ENCODE measurements at regions of chr4 and their contacts with region 1.

Region 1: DNA sequence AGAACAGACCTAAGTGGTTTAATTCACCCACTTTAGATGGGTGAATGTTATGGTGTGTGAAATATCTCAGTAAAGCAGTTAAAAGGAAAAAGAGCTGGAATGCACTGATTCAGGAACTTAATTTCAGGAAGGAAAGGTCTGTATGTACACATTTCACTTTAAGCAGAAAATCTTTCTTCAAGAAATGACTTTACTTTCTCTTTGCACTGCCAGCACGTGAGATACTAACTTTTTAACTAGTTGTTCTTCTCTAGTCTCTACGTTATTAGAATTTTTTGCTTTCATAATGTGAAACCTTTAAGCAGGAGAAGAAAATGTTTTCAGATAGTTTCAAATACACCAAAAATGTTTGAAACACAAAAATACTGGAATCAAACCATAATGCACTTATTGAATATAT is 18.8 kb downstream of the C4orf46 start:
- DNase-seq: no peak
- ATAC-seq: no peak
- H3K4me3 Mint-ChIP-seq: no peak overlapping the region
- H3K27ac Mint-ChIP-seq: no peak overlapping the region
- H3K4me1 Mint-ChIP-seq: peaks cover 9% of the 10 kb centered on the region
- H3K27me3 Mint-ChIP-seq: peaks cover 1% of the 10 kb centered on the region; the same call in 1 of the 2 replicates
- CTCF ChIP-seq: no peak

Region 2: GRCh38 chr4:158560284-158560683 is 92.6 kb before region 1 on chr4:
- CTCF ChIA-PET with region 1: no interaction called
- POLR2A ChIA-PET with region 1: interaction called, 11 read pairs
- DNase-seq: no peak
- ATAC-seq: no peak
- H3K4me3 Mint-ChIP-seq: no peak overlapping the region
- H3K27ac Mint-ChIP-seq: no peak overlapping the region
- H3K4me1 Mint-ChIP-seq: peaks cover 12% of the 10 kb centered on the region
- H3K27me3 Mint-ChIP-seq: no peaks in the 10 kb centered on the region
- CTCF ChIP-seq: no peak

Measured in WTC11 (cell line).